ENCODE measurements at regions of chrX and their contacts with region 1.

Region 1: GRCh38 chrX:70454441-70455365 is 10.1 kb downstream of the DLG3 start:
- DNase-seq: peak; percentile 91
- H3K4me3 Mint-ChIP-seq: peak overlapping the region; percentile 94
- H3K27ac Mint-ChIP-seq: peak overlapping the region; percentile 98
- H3K4me1 Mint-ChIP-seq: peaks cover 35% of the 10 kb centered on the region
- H3K27me3 Mint-ChIP-seq: no peaks in the 10 kb centered on the region

Region 2: GRCh38 chrX:70244881-70245280 is 209.8 kb before region 1 on chrX:
- intact Hi-C with region 1: no loop called
- DNase-seq: no peak
- H3K4me3 Mint-ChIP-seq: no peak overlapping the region
- H3K27ac Mint-ChIP-seq: no peak overlapping the region
- H3K4me1 Mint-ChIP-seq: no peaks in the 10 kb centered on the region
- H3K27me3 Mint-ChIP-seq: no peaks in the 10 kb centered on the region

Region 3: GRCh38 chrX:70433848-70434351 is 20.8 kb before region 1 on chrX:
- intact Hi-C with region 1: loop called (anchors 1 kb)
- DNase-seq: peak; percentile 92
- H3K4me3 Mint-ChIP-seq: peak overlapping the region; percentile 93
- H3K27ac Mint-ChIP-seq: peak overlapping the region; percentile 95
- H3K4me1 Mint-ChIP-seq: peaks cover 30% of the 10 kb centered on the region
- H3K27me3 Mint-ChIP-seq: peaks cover 6% of the 10 kb centered on the region

Region 4: DNA sequence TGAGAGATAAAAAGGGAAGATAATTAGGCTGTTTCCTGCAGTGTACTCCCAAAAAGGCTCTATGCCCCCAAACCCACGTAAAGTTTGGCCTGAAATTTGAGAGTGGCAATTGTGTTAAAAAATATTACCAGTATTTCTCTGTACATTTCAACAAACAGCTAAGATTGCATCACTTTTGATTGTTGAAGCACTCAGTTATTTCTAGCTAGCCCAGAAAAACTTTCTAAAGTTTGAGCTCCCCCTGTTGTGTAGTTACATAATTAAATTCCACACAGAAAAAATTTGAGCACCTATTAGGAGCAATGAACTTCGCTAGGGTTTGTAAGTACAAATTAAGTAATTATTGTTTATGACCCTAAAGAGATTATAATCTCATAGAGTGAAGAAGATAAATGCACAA is 99.4 kb after region 1 on chrX:
- intact Hi-C with region 1: loop called (anchors 5 kb)
- DNase-seq: no peak
- H3K4me3 Mint-ChIP-seq: no peak overlapping the region
- H3K27ac Mint-ChIP-seq: no peak overlapping the region
- H3K4me1 Mint-ChIP-seq: peaks cover 6% of the 10 kb centered on the region
- H3K27me3 Mint-ChIP-seq: peaks cover 4% of the 10 kb centered on the region

Region 5: DNA sequence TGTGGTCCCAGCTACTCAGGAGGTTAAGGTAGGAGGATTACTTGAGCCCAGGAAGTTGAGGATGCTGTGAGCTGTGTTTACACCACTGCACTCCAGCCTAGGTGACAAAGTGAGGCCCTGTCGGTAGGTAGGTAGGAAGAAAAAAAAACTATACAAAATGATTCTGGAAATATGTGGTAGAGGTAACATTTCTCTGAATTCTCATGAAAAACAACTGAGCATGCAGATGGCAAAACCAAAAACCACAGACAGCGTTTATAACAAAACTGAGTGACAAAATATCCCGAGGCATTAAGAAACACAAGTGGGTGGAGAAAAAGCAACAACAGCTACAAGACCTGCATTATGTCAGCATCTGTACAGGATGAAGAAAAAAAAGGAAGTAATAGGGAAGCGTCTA is 201.6 kb after region 1 on chrX:
- intact Hi-C with region 1: loop called (anchors 2 kb)
- DNase-seq: peak; percentile 61
- H3K4me3 Mint-ChIP-seq: peak overlapping the region; percentile 22
- H3K27ac Mint-ChIP-seq: peak overlapping the region; percentile 81
- H3K4me1 Mint-ChIP-seq: peaks cover 9% of the 10 kb centered on the region
- H3K27me3 Mint-ChIP-seq: no peaks in the 10 kb centered on the region

Region 6: GRCh38 chrX:70762285-70762684 is 307.6 kb after region 1 on chrX:
- intact Hi-C with region 1: loop called (anchors 5 kb)
- DNase-seq: no peak
- H3K4me3 Mint-ChIP-seq: no peak overlapping the region
- H3K27ac Mint-ChIP-seq: no peak overlapping the region
- H3K4me1 Mint-ChIP-seq: no peaks in the 10 kb centered on the region
- H3K27me3 Mint-ChIP-seq: peaks cover 7% of the 10 kb centered on the region

Measured in activated CD4-positive, alpha-beta T cell treated with anti-CD3 and anti-CD28 coated beads, Interleukin-2, amount 10 ng/mL, durations not matched to agents 24 days and 14 days (primary cell).